ENCODE measurements at regions of chr7 and their contacts with region 1.

Region 1: GRCh38 chr7:107150375-107151073 is 18.3 kb upstream of the HBP1 start:
- DNase-seq: peak; percentile 49
- H3K4me3 ChIP-seq: no peak overlapping the region
- H3K27ac ChIP-seq: no peak overlapping the region
- H3K4me1 ChIP-seq: peaks cover 0 to 6% of the 10 kb centered on the region in 2 experiments; a peak in 2 of 4 replicates
- H3K27me3 ChIP-seq: no peaks in the 10 kb centered on the region
- CTCF ChIP-seq: peak; percentile 91
- EP300 ChIP-seq: no peak
- RAD21 ChIP-seq: peak; percentile 91

Region 2: GRCh38 chr7:106793015-106793975 is 357.2 kb before region 1 on chr7:
- CTCF ChIA-PET with region 1: interaction called, 171 read pairs
- POLR2A ChIA-PET with region 1: no interaction called
- DNase-seq: peak; percentile 50
- H3K4me3 ChIP-seq: no peak overlapping the region
- H3K27ac ChIP-seq: no peak overlapping the region
- H3K4me1 ChIP-seq: peaks cover 0 to 3% of the 10 kb centered on the region in 2 experiments; a peak in 1 of 4 replicates
- H3K27me3 ChIP-seq: no peaks in the 10 kb centered on the region
- CTCF ChIP-seq: peak; percentile 87
- EP300 ChIP-seq: no peak
- RAD21 ChIP-seq: peak; percentile 94

Region 3: DNA sequence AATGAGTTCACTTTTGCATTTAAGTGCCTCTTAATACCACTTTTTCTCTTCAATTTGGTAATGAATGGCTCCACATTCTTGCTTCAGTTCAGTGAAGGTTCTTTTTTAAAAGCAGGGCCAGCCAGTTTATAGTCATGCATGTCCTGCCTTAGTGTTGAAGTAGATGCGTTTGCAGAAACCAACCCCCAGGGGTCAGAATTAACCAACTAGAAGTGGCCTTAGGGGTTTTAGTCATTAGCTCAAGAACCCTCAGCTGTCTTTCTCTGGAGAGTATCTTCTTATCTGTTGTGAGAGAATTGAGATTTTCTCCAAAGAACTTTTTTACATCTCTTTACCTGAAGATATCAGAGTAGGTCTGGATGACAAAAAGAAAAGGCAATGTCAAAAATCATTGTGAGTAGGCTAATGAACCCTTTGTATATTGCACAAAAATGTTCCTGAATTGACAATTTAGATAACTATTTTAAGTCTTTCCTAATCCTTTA is 203.2 kb before region 1 on chr7:
- CTCF ChIA-PET with region 1: interaction called, 118 read pairs
- POLR2A ChIA-PET with region 1: no interaction called
- DNase-seq: peak; percentile 72
- H3K4me3 ChIP-seq: no peak overlapping the region
- H3K27ac ChIP-seq: no peak overlapping the region
- H3K4me1 ChIP-seq: peaks cover 0 to under 1% of the 10 kb centered on the region in 2 experiments; a peak in 1 of 4 replicates
- H3K27me3 ChIP-seq: no peaks in the 10 kb centered on the region
- CTCF ChIP-seq: peak; percentile 98
- EP300 ChIP-seq: no peak
- RAD21 ChIP-seq: peak; percentile 96

Region 4: DNA sequence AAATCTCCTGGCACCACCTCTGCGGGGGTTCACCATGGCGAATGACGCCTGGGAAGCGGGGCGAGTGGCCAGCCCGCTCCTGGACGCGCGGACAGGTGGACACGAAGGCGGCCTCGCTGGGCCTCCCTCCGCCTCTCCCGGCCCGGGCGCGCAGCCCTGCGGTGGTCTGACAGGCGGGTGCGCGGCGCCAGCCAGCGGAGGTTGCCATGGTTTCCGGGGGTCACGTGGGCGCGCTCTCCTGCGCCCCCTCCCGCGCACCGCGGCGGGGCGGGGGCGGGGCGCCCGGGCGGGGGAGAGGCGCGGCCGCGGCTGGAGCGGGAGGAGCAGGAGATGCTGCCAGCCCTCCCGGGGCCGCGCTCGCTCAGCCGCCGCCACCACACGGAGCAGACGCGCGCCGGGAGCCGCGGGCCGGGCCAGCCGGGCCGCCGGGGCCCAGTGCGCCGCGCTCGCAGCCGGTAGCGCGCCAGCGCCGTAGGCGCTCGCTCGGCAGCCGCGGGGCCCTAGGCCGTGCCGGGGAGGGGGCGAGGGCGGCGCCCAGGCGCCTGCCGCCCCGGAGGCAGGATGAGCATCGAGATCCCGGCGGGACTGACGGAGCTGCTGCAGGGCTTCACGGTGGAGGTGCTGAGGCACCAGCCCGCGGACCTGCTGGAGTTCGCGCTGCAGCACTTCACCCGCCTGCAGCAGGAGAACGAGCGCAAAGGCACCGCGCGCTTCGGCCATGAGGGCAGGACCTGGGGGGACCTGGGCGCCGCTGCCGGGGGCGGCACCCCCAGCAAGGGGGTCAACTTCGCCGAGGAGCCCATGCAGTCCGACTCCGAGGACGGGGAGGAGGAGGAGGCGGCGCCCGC is 106.0 kb before region 1 on chr7 and contains the start of gene PRKAR2B:
- CTCF ChIA-PET with region 1: interaction called, 15 read pairs
- POLR2A ChIA-PET with region 1: no interaction called
- DNase-seq: peak; percentile 100
- H3K4me3 ChIP-seq: peak within 1 kb of the TSS; percentile 98 to 100
- H3K27ac ChIP-seq: peak within 1 kb of the TSS; percentile 51 to 93
- H3K4me1 ChIP-seq: peaks cover 12 to 28% of the 10 kb centered on the region in 2 experiments; a peak in 3 of 4 replicates
- H3K27me3 ChIP-seq: no peaks in the 10 kb centered on the region
- CTCF ChIP-seq: no peak
- EP300 ChIP-seq: 0 out of 4 replicates have a peak, but pooled peaks of 1 of the 2 experiments have one; percentile 28
- RAD21 ChIP-seq: peak; percentile 38
- polyA plus RNA-seq, gene PRKAR2B: 17.3 and 19.3 TPM in 2 replicates

Region 5: DNA sequence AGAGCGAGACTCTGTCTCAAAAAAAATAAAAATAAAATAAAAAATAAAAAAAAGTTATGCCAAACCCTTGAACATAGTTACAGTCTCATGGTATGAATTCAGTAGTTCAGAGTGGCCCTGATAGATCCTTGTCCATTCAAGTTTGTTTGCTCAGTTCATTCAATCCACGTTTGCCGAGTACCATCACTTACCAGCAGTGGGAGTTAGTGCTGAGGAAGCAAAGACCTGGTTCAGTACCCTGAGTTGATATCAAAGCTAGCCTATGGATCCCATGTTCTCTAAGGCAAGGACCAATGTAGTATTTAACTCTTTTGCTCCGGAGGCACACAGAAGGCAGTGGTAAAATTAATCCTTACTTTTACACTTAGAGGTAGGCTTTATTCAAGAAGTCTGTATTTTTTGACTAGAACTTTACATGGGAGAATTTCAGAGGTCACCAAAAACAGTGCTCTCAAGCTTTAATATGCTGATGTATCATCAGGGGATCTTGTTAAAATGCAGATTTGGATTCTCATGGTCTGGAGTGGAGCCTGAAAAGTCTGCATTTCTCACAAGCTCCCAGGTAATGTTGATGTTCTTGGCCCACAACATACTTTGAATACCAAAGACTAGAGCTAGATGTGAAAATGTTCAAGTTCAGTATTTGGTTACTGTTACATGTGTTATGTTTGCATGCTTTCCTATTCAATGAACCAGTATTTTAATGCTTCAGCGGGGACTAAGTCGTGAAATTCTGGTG is 19.9 kb before region 1 on chr7:
- CTCF ChIA-PET with region 1: interaction called, 90 read pairs
- POLR2A ChIA-PET with region 1: no interaction called
- DNase-seq: no peak
- H3K4me3 ChIP-seq: no peak overlapping the region
- H3K27ac ChIP-seq: no peak overlapping the region
- H3K4me1 ChIP-seq: no peaks in the 10 kb centered on the region; a peak in 1 of 4 replicates
- H3K27me3 ChIP-seq: no peaks in the 10 kb centered on the region
- CTCF ChIP-seq: peak; percentile 15; the same call in 1 of the 2 replicates
- EP300 ChIP-seq: no peak
- RAD21 ChIP-seq: no peak

Region 6: GRCh38 chr7:107168233-107169119 is 18.0 kb after region 1 on chr7 and contains the start of gene HBP1:
- CTCF ChIA-PET with region 1: interaction called, 77 read pairs
- POLR2A ChIA-PET with region 1: interaction called, 3 read pairs
- DNase-seq: peak; percentile 95
- H3K4me3 ChIP-seq: peak within 1 kb of the TSS; percentile 87 to 89
- H3K27ac ChIP-seq: peak within 1 kb of the TSS; percentile 97 to 98
- H3K4me1 ChIP-seq: peaks cover 0 to 13% of the 10 kb centered on the region in 2 experiments; a peak in 2 of 4 replicates
- H3K27me3 ChIP-seq: no peaks in the 10 kb centered on the region
- CTCF ChIP-seq: no peak
- EP300 ChIP-seq: no peak
- RAD21 ChIP-seq: no peak
- polyA plus RNA-seq, gene HBP1: 27.2 and 36.8 TPM in 2 replicates

Measured in SK-N-SH (cell line).